ENCODE measurements at regions of chr5 and their contacts with region 1.

Region 1: GRCh38 chr5:36744773-36745589 is 131.6 kb upstream of the NIPBL start:
- DNase-seq: peak; percentile 85 to 91
- H3K4me3 ChIP-seq: peak overlapping the region; percentile 70 to 98 (median 89)
- H3K27ac ChIP-seq: peak overlapping the region; percentile 93
- H3K4me1 ChIP-seq: peaks cover 9 to 15% (median 13%) of the 10 kb centered on the region in 4 experiments; a peak in 6 of 7 replicates
- H3K27me3 ChIP-seq: no peaks in the 10 kb centered on the region
- CTCF ChIP-seq: no peak
- EP300 ChIP-seq: peak; percentile 66 to 94; a peak in 2 of 3 replicates
- POLR2A ChIP-seq: peak; percentile 53 to 58
- RAD21 ChIP-seq: peak; percentile 12 to 17; a peak in 3 of 4 replicates

Region 2: GRCh38 chr5:36728697-36729543 is 16.1 kb before region 1 on chr5:
- CTCF ChIA-PET with region 1: interaction called, 34 read pairs
- POLR2A ChIA-PET with region 1: interaction called, 7 read pairs
- DNase-seq: no peak
- H3K4me3 ChIP-seq: no peak overlapping the region
- H3K27ac ChIP-seq: no peak overlapping the region
- H3K4me1 ChIP-seq: peaks cover 0 to 3% (median 0%) of the 10 kb centered on the region in 4 experiments; a peak in 3 of 7 replicates
- H3K27me3 ChIP-seq: no peaks in the 10 kb centered on the region
- CTCF ChIP-seq: peak in 2 of 3 experiments; percentile 51 to 63; a peak in 2 of 4 replicates
- EP300 ChIP-seq: no peak
- POLR2A ChIP-seq: no peak
- RAD21 ChIP-seq: peak; percentile 59 to 61

Region 3: DNA sequence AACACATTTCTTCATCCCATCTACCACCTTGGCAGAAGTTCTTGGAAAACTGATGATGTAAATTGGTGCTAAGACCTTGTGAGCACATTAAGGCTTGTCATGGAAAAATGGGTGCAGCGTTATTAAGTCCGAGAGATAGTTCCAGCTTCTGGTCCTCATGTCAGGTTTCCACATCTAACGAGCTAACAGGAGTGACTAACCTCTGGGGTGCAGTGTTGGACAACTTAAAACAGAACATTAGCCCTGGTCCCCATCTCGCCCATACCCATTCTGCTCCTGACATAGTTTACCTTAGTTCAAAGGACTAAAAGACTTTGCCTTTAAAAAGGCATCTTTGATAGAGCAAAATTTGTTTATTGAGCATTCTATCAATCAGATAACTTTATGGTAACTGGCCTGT is 10.6 kb before region 1 on chr5:
- CTCF ChIA-PET with region 1: interaction called, 36 read pairs
- POLR2A ChIA-PET with region 1: interaction called, 6 read pairs
- DNase-seq: no peak
- H3K4me3 ChIP-seq: no peak overlapping the region
- H3K27ac ChIP-seq: no peak overlapping the region
- H3K4me1 ChIP-seq: peaks cover 0 to under 1% (median 0%) of the 10 kb centered on the region in 4 experiments; a peak in 2 of 7 replicates
- H3K27me3 ChIP-seq: no peaks in the 10 kb centered on the region
- CTCF ChIP-seq: peak; percentile 5 to 48 (median 45); a peak in 3 of 4 replicates
- EP300 ChIP-seq: no peak
- POLR2A ChIP-seq: no peak
- RAD21 ChIP-seq: peak; percentile 67 to 75

Region 4: DNA sequence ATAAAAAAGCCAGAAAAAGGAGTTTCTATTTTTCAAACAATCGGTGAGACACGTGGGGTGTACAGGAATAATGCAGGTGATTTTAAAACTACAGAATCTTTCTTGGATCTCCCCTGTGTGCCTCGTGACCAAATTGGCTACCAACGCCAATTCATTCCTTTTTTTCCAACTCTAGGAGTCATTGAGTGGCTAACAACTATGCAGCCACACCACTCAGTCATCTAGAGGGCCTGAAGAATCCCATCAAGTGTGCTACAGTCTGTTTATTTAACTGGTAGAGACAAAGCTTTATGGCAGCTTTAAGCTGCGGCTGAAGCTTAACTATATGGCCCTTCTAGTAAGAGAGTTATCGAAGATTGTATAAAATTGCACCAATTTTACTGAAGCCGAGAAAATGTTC is 18.5 kb after region 1 on chr5:
- CTCF ChIA-PET with region 1: interaction called, 43 read pairs
- POLR2A ChIA-PET with region 1: interaction called, 5 read pairs
- DNase-seq: no peak
- H3K4me3 ChIP-seq: no peak overlapping the region
- H3K27ac ChIP-seq: no peak overlapping the region
- H3K4me1 ChIP-seq: no peaks in the 10 kb centered on the region
- H3K27me3 ChIP-seq: no peaks in the 10 kb centered on the region
- CTCF ChIP-seq: no peak
- EP300 ChIP-seq: no peak
- POLR2A ChIP-seq: no peak
- RAD21 ChIP-seq: no peak

Region 5: DNA sequence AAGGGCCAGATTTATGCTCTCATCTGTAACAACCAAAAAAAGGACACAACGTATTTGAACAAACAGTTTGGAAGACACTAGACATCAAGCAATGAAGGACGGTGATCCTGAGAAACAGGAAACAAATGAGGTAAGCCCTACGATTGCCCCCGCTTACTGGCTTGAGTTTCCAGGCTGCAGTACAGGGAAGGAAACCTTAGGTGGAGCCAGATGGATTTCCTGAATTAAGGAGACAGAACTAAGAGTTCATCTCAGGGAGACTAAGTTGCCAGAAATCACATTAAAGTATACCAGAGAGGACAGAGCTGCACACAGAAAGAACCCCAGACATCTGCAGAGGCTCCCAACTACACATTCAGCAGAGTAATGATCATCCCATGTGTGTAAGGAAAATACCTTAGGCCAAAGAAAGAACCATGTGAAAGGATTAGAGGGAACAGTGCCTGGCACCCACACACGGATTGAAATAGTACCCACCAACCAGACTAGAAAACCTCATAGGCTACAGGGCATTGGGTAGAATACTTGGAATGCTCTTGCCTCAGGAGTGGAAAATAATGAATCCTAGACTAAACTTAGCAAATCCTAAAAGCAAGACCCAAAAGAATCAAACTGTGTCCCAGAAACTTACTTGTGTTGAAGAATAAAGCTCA is 32.2 kb after region 1 on chr5:
- CTCF ChIA-PET with region 1: interaction called, 13 read pairs
- POLR2A ChIA-PET with region 1: interaction called, 3 read pairs
- DNase-seq: peak in 1 of 2 experiments; percentile 5
- H3K4me3 ChIP-seq: no peak overlapping the region
- H3K27ac ChIP-seq: no peak overlapping the region
- H3K4me1 ChIP-seq: no peaks in the 10 kb centered on the region
- H3K27me3 ChIP-seq: no peaks in the 10 kb centered on the region
- CTCF ChIP-seq: peak; percentile 25 to 73 (median 56)
- EP300 ChIP-seq: no peak
- POLR2A ChIP-seq: no peak
- RAD21 ChIP-seq: peak; percentile 57 to 64

Region 6: DNA sequence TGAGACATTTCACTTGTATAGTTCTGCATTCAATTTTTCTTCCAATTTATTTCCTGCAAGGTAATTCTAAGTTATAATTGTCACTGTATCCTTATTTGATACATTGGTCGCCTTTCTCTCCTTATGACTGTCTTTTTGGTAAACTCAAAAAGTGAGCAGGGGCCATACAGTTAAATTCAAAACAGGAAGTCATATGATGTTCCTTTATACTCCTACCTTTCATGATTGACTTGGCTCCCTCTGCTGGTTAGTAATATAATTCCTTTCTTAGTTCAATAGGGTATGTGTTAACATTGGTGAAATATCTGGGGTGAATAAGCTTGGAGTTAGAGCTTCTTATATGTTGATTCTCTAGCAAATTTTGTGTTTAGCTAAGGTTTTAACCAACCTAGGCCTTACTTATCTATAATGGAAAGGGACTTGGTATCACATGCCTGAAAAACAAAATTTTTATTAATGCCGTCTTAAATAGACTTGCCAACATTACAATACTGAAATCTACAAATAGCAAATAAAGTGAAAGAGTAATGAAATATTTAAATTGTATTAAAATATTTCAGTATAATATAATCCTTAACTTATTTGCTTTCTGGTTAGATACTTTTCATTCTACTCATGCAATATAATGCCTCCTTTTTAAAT is 125.5 kb after region 1 on chr5:
- CTCF ChIA-PET with region 1: interaction called, 121 read pairs
- POLR2A ChIA-PET with region 1: interaction called, 27 read pairs
- DNase-seq: no peak
- H3K4me3 ChIP-seq: no peak overlapping the region
- H3K27ac ChIP-seq: no peak overlapping the region
- H3K4me1 ChIP-seq: peaks cover 0 to 4% (median 0%) of the 10 kb centered on the region in 4 experiments; a peak in 4 of 7 replicates
- H3K27me3 ChIP-seq: no peaks in the 10 kb centered on the region
- CTCF ChIP-seq: peak in 2 of 3 experiments; percentile 36 to 57; a peak in 2 of 4 replicates
- EP300 ChIP-seq: no peak
- POLR2A ChIP-seq: no peak
- RAD21 ChIP-seq: peak; percentile 52 to 59

Region 7: GRCh38 chr5:36875790-36876388 is 130.9 kb after region 1 on chr5:
- CTCF ChIA-PET with region 1: interaction called, 121 read pairs
- POLR2A ChIA-PET with region 1: interaction called, 27 read pairs
- DNase-seq: peak in 1 of 2 experiments; percentile 68
- H3K4me3 ChIP-seq: peak overlapping the region; percentile 73 to 96 (median 94)
- H3K27ac ChIP-seq: peak overlapping the region; percentile 71
- H3K4me1 ChIP-seq: peaks cover 0 to 4% (median 0%) of the 10 kb centered on the region in 4 experiments; a peak in 3 of 7 replicates
- H3K27me3 ChIP-seq: no peaks in the 10 kb centered on the region
- CTCF ChIP-seq: peak; percentile 38 to 46 (median 44); a peak in 3 of 4 replicates
- EP300 ChIP-seq: no peak
- POLR2A ChIP-seq: no peak
- RAD21 ChIP-seq: peak; percentile 20 to 57

Measured in H1 (cell line).